HCT116 (cell line): ENCODE measurements at regions of chr2 and their contacts with region 1.

Region 1: DNA sequence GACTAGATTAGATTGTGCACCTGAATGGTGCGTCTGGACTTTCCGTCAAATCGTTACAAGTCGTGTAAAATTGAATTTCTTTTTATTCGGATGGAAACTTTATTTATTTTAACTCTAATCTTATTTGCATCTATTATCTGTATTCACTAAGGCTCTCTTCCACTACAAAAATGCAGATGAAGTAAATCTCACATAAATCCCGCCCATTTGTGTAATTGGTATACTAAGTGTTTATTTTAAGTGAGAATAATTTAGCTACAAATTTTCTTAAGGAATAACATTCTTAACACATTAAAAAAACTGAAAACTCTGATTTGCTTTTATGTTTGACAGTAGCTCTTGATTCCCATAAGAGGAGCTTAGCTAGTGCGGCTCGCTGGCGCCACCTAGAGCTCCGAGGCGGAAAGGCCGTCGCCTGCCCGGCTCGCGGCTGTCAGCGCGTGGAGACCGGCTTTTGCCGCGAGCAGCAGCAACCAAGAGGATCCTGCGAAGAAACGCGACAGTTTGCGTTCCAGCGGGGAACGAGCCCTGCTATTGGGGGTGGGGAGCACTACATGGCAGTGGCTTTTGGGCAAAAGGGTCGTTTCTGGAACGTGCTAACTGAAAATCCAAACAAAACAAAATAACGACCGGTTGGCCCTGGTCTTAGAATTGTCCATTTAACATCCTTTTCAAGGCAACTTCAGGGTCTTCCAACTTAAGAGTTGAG is 6.7 kb downstream of the SP9 start:
- DNase-seq: peak; percentile 58
- ATAC-seq: peak; percentile 54
- H3K4me3 ChIP-seq: no peak overlapping the region
- H3K27ac ChIP-seq: no peak overlapping the region
- H3K4me1 ChIP-seq: peaks cover 0 to 27% of the 10 kb centered on the region in 2 experiments; a peak in 2 of 4 replicates
- H3K27me3 ChIP-seq: no peaks in the 10 kb centered on the region
- CTCF ChIP-seq: peak; percentile 92 to 99 (median 97)
- POLR2A ChIP-seq: no peak
- RAD21 ChIP-seq: peak; percentile 99

Region 2: GRCh38 chr2:173571021-173571882 is 770.2 kb before region 1 on chr2:
- CTCF ChIA-PET with region 1: interaction called, 6 read pairs
- POLR2A ChIA-PET with region 1: no interaction called
- RAD21 ChIA-PET with region 1: no interaction called
- intact Hi-C with region 1: loop called (anchors 5 kb)
- DNase-seq: peak; percentile 24
- ATAC-seq: peak; percentile 73
- H3K4me3 ChIP-seq: no peak overlapping the region
- H3K27ac ChIP-seq: no peak overlapping the region
- H3K4me1 ChIP-seq: peaks cover 16 to 35% of the 10 kb centered on the region in 2 experiments
- H3K27me3 ChIP-seq: no peaks in the 10 kb centered on the region
- CTCF ChIP-seq: peak; percentile 30 to 66 (median 50); a peak in 4 of 6 replicates
- POLR2A ChIP-seq: no peak
- RAD21 ChIP-seq: peak; percentile 82

Region 3: GRCh38 chr2:173884025-173884802 is 457.2 kb before region 1 on chr2:
- CTCF ChIA-PET with region 1: interaction called, 13 read pairs
- POLR2A ChIA-PET with region 1: no interaction called
- RAD21 ChIA-PET with region 1: interaction called in 1 of 2 experiments, 5 read pairs
- intact Hi-C with region 1: loop called (anchors 1 kb)
- DNase-seq: peak; percentile 47
- ATAC-seq: peak; percentile 93
- H3K4me3 ChIP-seq: no peak overlapping the region
- H3K27ac ChIP-seq: no peak overlapping the region
- H3K4me1 ChIP-seq: no peaks in the 10 kb centered on the region
- H3K27me3 ChIP-seq: no peaks in the 10 kb centered on the region
- CTCF ChIP-seq: peak; percentile 69 to 86 (median 85); a peak in 5 of 6 replicates
- POLR2A ChIP-seq: no peak
- RAD21 ChIP-seq: peak; percentile 72

Region 4: GRCh38 chr2:174078275-174078674 is 263.2 kb before region 1 on chr2:
- CTCF ChIA-PET with region 1: interaction called, 6 read pairs
- POLR2A ChIA-PET with region 1: no interaction called
- RAD21 ChIA-PET with region 1: no interaction called
- intact Hi-C with region 1: loop called (anchors 5 kb)
- DNase-seq: no peak
- ATAC-seq: no peak
- H3K4me3 ChIP-seq: no peak overlapping the region
- H3K27ac ChIP-seq: no peak overlapping the region
- H3K4me1 ChIP-seq: no peaks in the 10 kb centered on the region
- H3K27me3 ChIP-seq: no peaks in the 10 kb centered on the region
- CTCF ChIP-seq: peak; percentile 27 to 59 (median 43); a peak in 5 of 6 replicates
- POLR2A ChIP-seq: no peak
- RAD21 ChIP-seq: peak; percentile 32; the same call in 1 of the 2 replicates

Region 5: GRCh38 chr2:174248187-174248997 is 93.0 kb before region 1 on chr2 and contains the start of gene OLA1:
- CTCF ChIA-PET with region 1: no interaction called
- POLR2A ChIA-PET with region 1: interaction called, 6 read pairs
- RAD21 ChIA-PET with region 1: interaction called in 1 of 2 experiments, 4 read pairs
- intact Hi-C with region 1: loop called (anchors 5 kb)
- DNase-seq: peak; percentile 88
- ATAC-seq: peak; percentile 96
- H3K4me3 ChIP-seq: peak within 1 kb of the TSS; percentile 77 to 91
- H3K27ac ChIP-seq: peak within 1 kb of the TSS; percentile 74
- H3K4me1 ChIP-seq: peaks cover 13 to 28% of the 10 kb centered on the region in 2 experiments
- H3K27me3 ChIP-seq: no peaks in the 10 kb centered on the region
- CTCF ChIP-seq: no peak
- POLR2A ChIP-seq: peak; percentile 88
- RAD21 ChIP-seq: no peak; the same call in 1 of the 2 replicates
- total RNA-seq, gene OLA1: 219 TPM

Region 6: DNA sequence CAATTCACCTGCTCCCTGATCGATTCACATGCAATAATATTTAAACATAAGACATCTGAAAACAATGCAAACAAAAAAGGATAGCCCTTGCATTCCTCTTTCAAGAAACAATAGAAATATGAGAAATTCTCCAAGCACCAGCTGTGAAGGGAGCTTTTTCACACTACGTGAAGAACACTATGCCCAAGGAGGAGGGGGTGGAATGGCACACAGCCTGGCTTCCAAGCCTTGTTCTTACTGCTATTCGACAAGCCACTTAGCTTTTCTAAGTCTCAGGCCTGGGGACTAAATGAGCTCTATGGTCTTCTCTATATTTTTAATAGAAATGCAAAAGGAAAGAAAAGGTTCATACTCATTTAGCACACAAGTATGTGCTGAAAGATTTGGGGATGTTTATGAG is 515.0 kb after region 1 on chr2:
- CTCF ChIA-PET with region 1: no interaction called
- POLR2A ChIA-PET with region 1: no interaction called
- RAD21 ChIA-PET with region 1: no interaction called
- intact Hi-C with region 1: no loop called
- DNase-seq: no peak
- ATAC-seq: no peak
- H3K4me3 ChIP-seq: no peak overlapping the region
- H3K27ac ChIP-seq: no peak overlapping the region
- H3K4me1 ChIP-seq: no peaks in the 10 kb centered on the region
- H3K27me3 ChIP-seq: no peaks in the 10 kb centered on the region
- CTCF ChIP-seq: no peak
- POLR2A ChIP-seq: no peak
- RAD21 ChIP-seq: no peak